ENCODE measurements at regions of chr1 and their contacts with region 1.

Region 1: GRCh38 chr1:94792473-94793295 is 27.5 kb upstream of the SLC44A3 start:
- DNase-seq: peak; percentile 69
- ATAC-seq: peak; percentile 83
- H3K4me3 ChIP-seq: peak overlapping the region in 1 of 5 experiments; percentile 11
- H3K4me3 Mint-ChIP-seq: peak overlapping the region; percentile 50
- H3K27ac ChIP-seq: no peak overlapping the region
- H3K27ac Mint-ChIP-seq: peak overlapping the region; percentile 33
- H3K4me1 ChIP-seq: peaks cover 37 to 43% of the 10 kb centered on the region in 2 donors
- H3K4me1 Mint-ChIP-seq: peaks cover 48% of the 10 kb centered on the region
- H3K27me3 ChIP-seq: no peaks in the 10 kb centered on the region
- H3K27me3 Mint-ChIP-seq: no peaks in the 10 kb centered on the region
- CTCF ChIP-seq: peak; percentile 53

Region 2: GRCh38 chr1:94719926-94720793 is 72.5 kb before region 1 on chr1:
- CTCF ChIA-PET with region 1: no interaction called
- POLR2A ChIA-PET with region 1: no interaction called
- intact Hi-C with region 1: loop called (anchors 10 kb)
- DNase-seq: peak; percentile 58
- ATAC-seq: peak; percentile 77
- H3K4me3 ChIP-seq: no peak overlapping the region
- H3K4me3 Mint-ChIP-seq: peak overlapping the region; percentile 58
- H3K27ac ChIP-seq: peak overlapping the region in 1 of 2 donors; percentile 47
- H3K27ac Mint-ChIP-seq: peak overlapping the region; percentile 58
- H3K4me1 ChIP-seq: peaks cover 19 to 20% of the 10 kb centered on the region in 2 donors
- H3K4me1 Mint-ChIP-seq: peaks cover 25% of the 10 kb centered on the region
- H3K27me3 ChIP-seq: no peaks in the 10 kb centered on the region
- H3K27me3 Mint-ChIP-seq: no peaks in the 10 kb centered on the region
- CTCF ChIP-seq: no peak

Region 3: GRCh38 chr1:94734963-94735899 is 57.5 kb before region 1 on chr1:
- CTCF ChIA-PET with region 1: no interaction called
- POLR2A ChIA-PET with region 1: no interaction called
- intact Hi-C with region 1: no loop called
- DNase-seq: no peak
- ATAC-seq: no peak
- H3K4me3 ChIP-seq: no peak overlapping the region
- H3K4me3 Mint-ChIP-seq: no peak overlapping the region
- H3K27ac ChIP-seq: no peak overlapping the region
- H3K27ac Mint-ChIP-seq: no peak overlapping the region
- H3K4me1 ChIP-seq: no peaks in the 10 kb centered on the region
- H3K4me1 Mint-ChIP-seq: no peaks in the 10 kb centered on the region
- H3K27me3 ChIP-seq: peaks cover 0 to 9% (median 3%) of the 10 kb centered on the region in 4 experiments
- H3K27me3 Mint-ChIP-seq: peaks cover 42% of the 10 kb centered on the region
- CTCF ChIP-seq: no peak